PC-9 (cell line): ENCODE measurements at regions of chr19 and their contacts with region 1.

Region 1: GRCh38 chr19:38964738-38965137 is 10.8 kb downstream of the FBXO17 start:
- DNase-seq: no peak
- H3K4me3 ChIP-seq: no peak overlapping the region
- H3K27ac ChIP-seq: no peak overlapping the region
- H3K4me1 ChIP-seq: no peaks in the 10 kb centered on the region
- H3K27me3 ChIP-seq: no peaks in the 10 kb centered on the region
- CTCF ChIP-seq: no peak

Region 2: GRCh38 chr19:39031368-39032062 is 66.8 kb after region 1 on chr19:
- CTCF ChIA-PET with region 1: no interaction called
- POLR2A ChIA-PET with region 1: no interaction called
- intact Hi-C with region 1: loop called (anchors 2 kb)
- DNase-seq: peak; percentile 94 to 99
- H3K4me3 ChIP-seq: peak overlapping the region; percentile 77
- H3K27ac ChIP-seq: peak overlapping the region; percentile 76
- H3K4me1 ChIP-seq: peaks cover 25% of the 10 kb centered on the region
- H3K27me3 ChIP-seq: no peaks in the 10 kb centered on the region
- CTCF ChIP-seq: no peak

Region 3: GRCh38 chr19:39110263-39110967 is 145.7 kb after region 1 on chr19:
- CTCF ChIA-PET with region 1: no interaction called
- POLR2A ChIA-PET with region 1: no interaction called
- intact Hi-C with region 1: loop called (anchors 2 kb)
- DNase-seq: peak; percentile 42 to 65
- H3K4me3 ChIP-seq: no peak overlapping the region
- H3K27ac ChIP-seq: peak overlapping the region; percentile 88
- H3K4me1 ChIP-seq: peaks cover 23% of the 10 kb centered on the region
- H3K27me3 ChIP-seq: no peaks in the 10 kb centered on the region
- CTCF ChIP-seq: peak; percentile 90

Region 4: DNA sequence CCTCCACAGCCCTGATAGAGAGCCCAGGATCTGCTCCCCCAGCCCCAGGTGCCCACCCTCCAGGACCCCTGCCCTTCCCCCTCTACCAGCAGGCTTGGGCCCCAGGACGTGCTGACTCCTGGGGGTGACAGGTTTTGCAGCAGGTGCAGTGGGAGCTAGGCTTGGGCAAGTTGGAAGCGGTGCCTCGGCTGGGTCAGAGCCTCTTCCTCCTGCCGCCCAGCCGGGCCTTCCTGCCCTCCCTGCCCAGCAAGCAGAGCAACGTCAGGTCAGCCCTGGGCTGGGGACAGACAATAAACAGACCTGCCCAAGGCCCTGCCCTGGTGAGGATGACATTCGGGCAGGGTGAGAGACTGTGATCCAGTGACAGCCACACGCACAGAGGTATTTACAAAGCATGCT is 222.8 kb after region 1 on chr19:
- CTCF ChIA-PET with region 1: interaction called, 13 read pairs
- POLR2A ChIA-PET with region 1: no interaction called
- intact Hi-C with region 1: no loop called
- DNase-seq: no peak
- H3K4me3 ChIP-seq: no peak overlapping the region
- H3K27ac ChIP-seq: no peak overlapping the region
- H3K4me1 ChIP-seq: no peaks in the 10 kb centered on the region
- H3K27me3 ChIP-seq: no peaks in the 10 kb centered on the region
- CTCF ChIP-seq: peak; percentile 72

Region 5: DNA sequence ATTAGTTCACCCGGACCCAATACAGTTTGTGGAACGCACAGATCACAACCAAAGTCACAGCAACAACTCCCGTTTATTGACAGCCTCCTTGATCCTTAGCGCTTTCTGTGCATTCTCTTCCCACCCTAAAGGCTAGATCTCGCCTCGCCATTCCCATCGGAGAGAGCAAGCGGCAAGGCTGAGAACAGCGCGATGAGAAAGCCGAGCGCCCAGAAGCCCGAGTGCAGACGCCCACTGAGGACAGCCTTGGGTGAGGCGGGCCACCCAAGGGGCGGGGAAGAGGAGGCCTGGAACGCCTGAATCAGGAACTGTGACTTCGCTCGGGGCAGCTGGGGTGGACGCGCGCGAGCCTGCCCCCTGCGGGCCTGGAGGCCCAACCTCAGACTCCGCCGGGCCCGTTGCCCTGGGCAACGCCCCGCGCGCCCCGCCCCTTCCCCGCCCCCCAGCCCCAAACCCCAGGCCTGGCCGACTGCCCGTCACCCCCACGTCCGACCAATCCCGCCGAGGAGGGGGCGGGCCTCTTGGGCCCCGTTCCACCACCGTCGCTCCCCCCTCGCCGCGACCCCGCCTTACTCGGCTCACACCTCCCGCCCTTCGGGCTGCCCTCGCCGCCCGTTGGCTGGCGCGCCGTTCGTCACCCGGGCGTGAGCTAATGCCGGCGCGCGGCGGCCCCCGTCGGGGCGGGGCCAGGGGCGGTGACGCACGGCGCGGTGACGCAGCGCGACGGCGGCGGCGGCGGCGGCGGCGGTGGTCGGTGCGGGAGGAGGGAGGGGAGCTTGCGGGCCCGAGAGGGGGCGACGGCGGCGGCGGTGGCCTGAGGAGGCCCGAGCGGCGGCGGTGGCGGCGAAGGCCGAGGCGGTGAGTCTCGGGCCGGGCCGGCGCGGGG is 377.2 kb after region 1 on chr19 and contains the start of gene SAMD4B:
- CTCF ChIA-PET with region 1: no interaction called
- POLR2A ChIA-PET with region 1: no interaction called
- intact Hi-C with region 1: loop called (anchors 5 kb)
- DNase-seq: peak; percentile 87 to 99
- H3K4me3 ChIP-seq: peak within 1 kb of the TSS; percentile 89
- H3K27ac ChIP-seq: peak within 1 kb of the TSS; percentile 34
- H3K4me1 ChIP-seq: peaks cover 16% of the 10 kb centered on the region
- H3K27me3 ChIP-seq: no peaks in the 10 kb centered on the region
- CTCF ChIP-seq: peak; percentile 65
- total RNA-seq, gene SAMD4B: 152 and 163 TPM in 2 replicates